CD8-positive, alpha-beta memory T cell (primary cell): ENCODE measurements at regions of chr6 and their contacts with region 1.

Region 1: GRCh38 chr6:31597006-31597405 is 4.2 kb upstream of the NCR3 start:
- DNase-seq: peak in 3 of 5 donors; percentile 64 to 80 (median 67)
- H3K4me3 ChIP-seq: no peak overlapping the region
- H3K4me3 Mint-ChIP-seq: peak overlapping the region in 6 of 7 donors; percentile 19 to 66 (median 40)
- H3K27ac ChIP-seq: no peak overlapping the region
- H3K27ac Mint-ChIP-seq: peak overlapping the region in 7 of 8 donors; percentile 48 to 86 (median 73)
- H3K4me1 ChIP-seq: peaks cover 55% of the 10 kb centered on the region
- H3K4me1 Mint-ChIP-seq: peaks cover 38 to 54% (median 50%) of the 10 kb centered on the region in 3 donors
- H3K27me3 ChIP-seq: no peaks in the 10 kb centered on the region
- H3K27me3 Mint-ChIP-seq: peaks cover 0 to 2% of the 10 kb centered on the region in 2 donors

Region 2: GRCh38 chr6:31441365-31442267 is 155.4 kb before region 1 on chr6:
- CTCF ChIA-PET with region 1: no interaction called
- POLR2A ChIA-PET with region 1: no interaction called
- DNase-seq: peak; percentile 71 to 90 (median 79)
- H3K4me3 ChIP-seq: no peak overlapping the region
- H3K4me3 Mint-ChIP-seq: peak overlapping the region in 1 of 7 donors; percentile 32
- H3K27ac ChIP-seq: no peak overlapping the region
- H3K27ac Mint-ChIP-seq: peak overlapping the region in 1 of 8 donors; percentile 19
- H3K4me1 ChIP-seq: no peaks in the 10 kb centered on the region
- H3K4me1 Mint-ChIP-seq: peaks cover 3 to 7% (median 5%) of the 10 kb centered on the region in 3 donors
- H3K27me3 ChIP-seq: no peaks in the 10 kb centered on the region
- H3K27me3 Mint-ChIP-seq: peaks cover 20 to 54% of the 10 kb centered on the region in 2 donors

Region 3: GRCh38 chr6:31541658-31542521 is 55.1 kb before region 1 on chr6 and contains the start of gene DDX39B:
- CTCF ChIA-PET with region 1: interaction called, 504 read pairs
- POLR2A ChIA-PET with region 1: interaction called, 9 read pairs
- DNase-seq: peak; percentile 90 to 97 (median 94)
- H3K4me3 ChIP-seq: peak within 1 kb of the TSS; percentile 100
- H3K4me3 Mint-ChIP-seq: peak within 1 kb of the TSS; percentile 96 to 99 (median 98)
- H3K27ac ChIP-seq: peak within 1 kb of the TSS; percentile 100
- H3K27ac Mint-ChIP-seq: peak within 1 kb of the TSS; percentile 99 to 100 (median 99)
- H3K4me1 ChIP-seq: peaks cover 49% of the 10 kb centered on the region
- H3K4me1 Mint-ChIP-seq: peaks cover 59 to 61% (median 61%) of the 10 kb centered on the region in 3 donors
- H3K27me3 ChIP-seq: no peaks in the 10 kb centered on the region
- H3K27me3 Mint-ChIP-seq: no peaks in the 10 kb centered on the region
- total RNA-seq, gene DDX39B: 643 to 658 TPM

Region 4: DNA sequence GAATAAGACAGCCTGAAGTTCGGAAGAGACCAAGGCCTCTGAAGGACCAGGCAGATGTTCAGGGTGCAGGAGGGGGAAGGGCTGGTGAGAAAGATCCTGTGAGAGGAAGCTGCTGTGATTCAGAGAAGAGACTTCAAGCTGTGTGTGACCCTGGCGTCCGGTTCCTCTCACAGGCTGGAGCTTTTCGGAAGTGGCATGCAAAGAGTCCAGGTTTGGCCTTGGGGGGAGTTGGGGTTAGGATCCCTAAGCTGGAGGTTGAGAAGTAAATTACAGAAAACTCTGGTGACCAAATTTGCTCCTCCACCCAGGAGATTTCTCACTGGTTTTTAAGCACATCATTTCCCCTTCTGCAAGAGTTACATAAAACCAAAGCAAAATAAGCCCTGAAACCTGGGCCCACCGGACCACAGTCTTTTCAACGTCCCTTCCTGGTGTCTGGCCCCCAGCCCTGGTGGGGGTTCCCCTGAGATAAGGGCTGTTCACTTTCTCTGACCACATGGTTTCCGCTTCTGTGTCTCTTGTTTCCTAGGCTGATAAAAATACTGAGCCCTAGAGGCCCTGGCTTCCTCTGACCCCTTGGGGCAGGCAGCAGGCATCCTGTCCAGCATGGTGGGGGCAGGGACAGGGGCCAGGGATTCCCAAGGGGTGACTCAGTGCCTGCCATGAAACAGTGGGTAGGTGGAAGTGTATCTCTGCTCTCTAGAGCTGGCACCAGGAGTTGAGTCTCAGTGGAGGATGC is 36.9 kb before region 1 on chr6:
- CTCF ChIA-PET with region 1: interaction called, 96 read pairs
- POLR2A ChIA-PET with region 1: interaction called, 12 read pairs
- DNase-seq: peak in 3 of 5 donors; percentile 42 to 64 (median 49)
- H3K4me3 ChIP-seq: peak overlapping the region; percentile 54
- H3K4me3 Mint-ChIP-seq: peak overlapping the region; percentile 76 to 91 (median 85)
- H3K27ac ChIP-seq: peak overlapping the region; percentile 18
- H3K27ac Mint-ChIP-seq: peak overlapping the region; percentile 89 to 97 (median 94)
- H3K4me1 ChIP-seq: peaks cover 70% of the 10 kb centered on the region
- H3K4me1 Mint-ChIP-seq: peaks cover 62 to 79% (median 74%) of the 10 kb centered on the region in 3 donors
- H3K27me3 ChIP-seq: no peaks in the 10 kb centered on the region
- H3K27me3 Mint-ChIP-seq: no peaks in the 10 kb centered on the region

Region 5: DNA sequence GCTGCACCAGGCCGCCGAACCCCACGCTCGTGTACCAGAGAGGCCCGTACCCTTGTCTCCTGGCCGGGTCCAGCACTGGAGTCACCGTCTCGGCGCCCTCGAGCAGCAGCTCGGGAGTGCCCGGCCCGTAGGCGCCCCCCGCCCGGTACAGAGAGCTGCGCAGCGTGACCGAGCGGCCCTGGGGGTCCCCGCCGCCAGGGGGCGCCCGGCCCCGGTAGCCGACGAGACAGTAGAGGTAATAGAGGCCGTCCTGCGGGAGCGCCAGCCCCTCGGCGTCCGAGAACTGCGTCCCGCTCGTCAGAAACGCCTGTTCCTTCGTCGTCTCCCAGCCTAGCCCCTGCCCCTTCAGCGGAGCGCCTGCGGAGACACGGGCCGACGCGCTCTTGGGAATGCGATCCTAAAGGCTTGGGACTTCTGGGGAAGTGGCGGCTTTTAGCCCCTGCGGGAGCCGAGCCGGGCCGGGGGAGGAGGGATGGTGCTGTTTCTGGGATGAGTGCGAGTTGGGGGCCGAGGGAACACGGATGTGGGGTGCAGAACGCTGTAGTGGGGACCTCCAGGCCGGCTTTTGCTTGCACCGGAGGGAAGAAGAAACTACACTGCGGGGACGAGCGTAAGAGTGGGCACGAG is 16.1 kb before region 1 on chr6:
- CTCF ChIA-PET with region 1: interaction called, 692 read pairs
- POLR2A ChIA-PET with region 1: interaction called, 91 read pairs
- DNase-seq: peak; percentile 83 to 91 (median 87)
- H3K4me3 ChIP-seq: peak overlapping the region; percentile 93
- H3K4me3 Mint-ChIP-seq: peak overlapping the region; percentile 98 to 100 (median 99)
- H3K27ac ChIP-seq: peak overlapping the region; percentile 85
- H3K27ac Mint-ChIP-seq: peak overlapping the region; percentile 87 to 100 (median 96)
- H3K4me1 ChIP-seq: peaks cover 80% of the 10 kb centered on the region
- H3K4me1 Mint-ChIP-seq: peaks cover 70 to 88% (median 80%) of the 10 kb centered on the region in 3 donors
- H3K27me3 ChIP-seq: no peaks in the 10 kb centered on the region
- H3K27me3 Mint-ChIP-seq: peaks cover 0 to 1% of the 10 kb centered on the region in 2 donors

Region 6: DNA sequence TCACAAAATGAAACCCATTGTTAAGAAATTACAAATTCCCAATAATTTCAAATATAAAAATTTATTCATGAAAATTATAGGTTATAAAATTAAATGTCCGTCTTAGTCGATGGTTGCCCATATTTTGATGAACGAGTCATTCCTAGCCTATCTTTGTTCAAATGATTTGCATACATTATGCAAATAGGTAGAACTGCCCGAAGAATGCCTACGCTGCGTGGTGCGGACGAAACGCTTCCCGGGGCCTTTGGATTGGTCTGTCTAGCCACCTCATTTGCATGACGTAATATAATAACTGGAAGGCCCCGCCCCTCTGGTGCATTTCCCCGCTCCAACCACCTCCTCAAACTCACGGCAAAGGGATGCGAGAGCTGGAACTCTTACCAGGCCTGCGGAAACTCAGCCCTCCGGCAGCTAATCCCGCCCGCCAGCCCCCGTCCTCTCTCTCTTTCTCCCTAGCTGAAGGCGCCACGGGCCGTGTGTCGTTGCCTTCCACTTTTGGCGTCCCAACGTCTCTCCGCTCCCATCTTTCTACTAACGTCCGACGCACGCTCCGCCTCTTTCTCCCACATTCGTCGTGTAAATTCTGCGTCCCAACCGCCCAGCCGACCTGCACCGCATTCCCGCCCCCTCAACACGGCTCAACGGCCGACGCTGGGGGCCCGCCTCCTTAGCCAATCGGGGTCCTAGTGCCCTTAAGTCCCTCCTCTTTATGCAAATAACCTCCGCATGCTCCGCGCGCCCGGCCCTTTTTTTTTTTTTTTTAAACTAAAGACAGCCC is 23.0 kb after region 1 on chr6:
- CTCF ChIA-PET with region 1: interaction called, 15 read pairs
- POLR2A ChIA-PET with region 1: interaction called, 3 read pairs
- DNase-seq: peak; percentile 95 to 98 (median 96)
- H3K4me3 ChIP-seq: peak overlapping the region; percentile 92
- H3K4me3 Mint-ChIP-seq: peak overlapping the region; percentile 86 to 95 (median 91)
- H3K27ac ChIP-seq: peak overlapping the region; percentile 99
- H3K27ac Mint-ChIP-seq: peak overlapping the region; percentile 94 to 100 (median 98)
- H3K4me1 ChIP-seq: peaks cover 37% of the 10 kb centered on the region
- H3K4me1 Mint-ChIP-seq: peaks cover 37 to 56% (median 47%) of the 10 kb centered on the region in 3 donors
- H3K27me3 ChIP-seq: no peaks in the 10 kb centered on the region
- H3K27me3 Mint-ChIP-seq: peaks cover 0 to 3% of the 10 kb centered on the region in 2 donors